ENCODE measurements at regions of chr7 and their contacts with region 1.

Region 1: GRCh38 chr7:99733448-99733847 is 1.5 kb downstream of the CYP3A7 start:
- DNase-seq: peak; percentile 42
- ATAC-seq: peak; percentile 49
- H3K4me3 ChIP-seq: no peak overlapping the region
- H3K27ac ChIP-seq: peak overlapping the region; percentile 50
- H3K4me1 ChIP-seq: peaks cover 81% of the 10 kb centered on the region
- H3K27me3 ChIP-seq: no peaks in the 10 kb centered on the region
- CTCF ChIP-seq: peak; percentile 63
- EP300 ChIP-seq: no peak
- POLR2A ChIP-seq: no peak
- RAD21 ChIP-seq: no peak

Region 2: GRCh38 chr7:99551767-99552463 is 181.5 kb before region 1 on chr7 and contains the start of gene FAM200A:
- CTCF ChIA-PET with region 1: no interaction called
- POLR2A ChIA-PET with region 1: no interaction called
- in situ Hi-C with region 1: no loop called
- intact Hi-C with region 1: no loop called
- DNase-seq: peak; percentile 81
- ATAC-seq: peak; percentile 99
- H3K4me3 ChIP-seq: peak within 1 kb of the TSS; percentile 72 to 92 (median 88)
- H3K27ac ChIP-seq: peak within 1 kb of the TSS; percentile 65
- H3K4me1 ChIP-seq: peaks cover 24% of the 10 kb centered on the region
- H3K27me3 ChIP-seq: no peaks in the 10 kb centered on the region; a peak in 1 of 5 replicates
- CTCF ChIP-seq: no peak; the same call in 1 of the 2 replicates
- EP300 ChIP-seq: peak in 1 of 2 experiments; percentile 13; a peak in 1 of 4 replicates
- POLR2A ChIP-seq: peak; percentile 85
- RAD21 ChIP-seq: 0 out of 2 replicates have a peak, but pooled peaks have one; percentile 19
- total RNA-seq, gene FAM200A: 6.3 and 10.4 TPM in 2 replicates

Region 3: DNA sequence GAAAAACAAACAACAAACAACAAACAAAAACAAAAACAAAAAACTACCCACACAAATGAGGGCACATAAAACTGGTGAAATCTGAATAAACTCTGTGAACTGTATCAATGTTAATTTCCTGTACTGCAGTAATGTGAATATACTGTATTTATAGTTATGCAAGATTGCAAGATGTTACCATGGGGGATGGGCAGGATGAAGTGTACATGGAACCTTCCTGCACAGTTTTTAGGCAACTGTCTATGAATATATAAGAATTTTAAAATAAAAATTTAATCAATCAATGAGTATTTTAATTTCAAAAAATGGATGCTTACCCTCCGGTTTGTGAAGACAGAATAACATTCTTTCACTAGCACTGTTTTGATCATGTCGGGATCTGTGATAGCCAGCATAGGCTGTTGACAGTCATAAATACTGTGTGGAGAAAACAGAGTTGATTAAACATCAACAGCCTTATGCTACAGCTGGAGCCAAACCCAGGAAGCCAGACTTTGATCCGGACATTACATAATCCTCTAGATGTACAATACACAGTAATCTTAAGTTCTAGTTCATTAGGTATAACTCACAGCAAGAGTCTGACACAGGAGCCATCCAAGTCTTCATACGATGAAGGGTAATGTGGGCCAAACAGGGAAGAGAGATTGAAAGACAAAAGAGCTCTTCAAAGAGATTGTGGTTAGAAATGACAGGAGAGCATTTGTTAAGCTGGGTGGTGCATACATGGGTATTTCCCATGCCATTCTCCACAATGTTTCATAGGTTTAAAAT is 13.3 kb before region 1 on chr7:
- CTCF ChIA-PET with region 1: no interaction called
- POLR2A ChIA-PET with region 1: interaction called, 16 read pairs
- in situ Hi-C with region 1: no loop called
- intact Hi-C with region 1: no loop called
- DNase-seq: peak; percentile 70
- ATAC-seq: peak; percentile 86
- H3K4me3 ChIP-seq: no peak overlapping the region; a peak in 1 of 6 replicates
- H3K27ac ChIP-seq: peak overlapping the region; percentile 48
- H3K4me1 ChIP-seq: peaks cover 24% of the 10 kb centered on the region
- H3K27me3 ChIP-seq: no peaks in the 10 kb centered on the region
- CTCF ChIP-seq: no peak
- EP300 ChIP-seq: peak in 1 of 2 experiments; percentile 73; a peak in 2 of 4 replicates
- POLR2A ChIP-seq: no peak
- RAD21 ChIP-seq: no peak

Region 4: DNA sequence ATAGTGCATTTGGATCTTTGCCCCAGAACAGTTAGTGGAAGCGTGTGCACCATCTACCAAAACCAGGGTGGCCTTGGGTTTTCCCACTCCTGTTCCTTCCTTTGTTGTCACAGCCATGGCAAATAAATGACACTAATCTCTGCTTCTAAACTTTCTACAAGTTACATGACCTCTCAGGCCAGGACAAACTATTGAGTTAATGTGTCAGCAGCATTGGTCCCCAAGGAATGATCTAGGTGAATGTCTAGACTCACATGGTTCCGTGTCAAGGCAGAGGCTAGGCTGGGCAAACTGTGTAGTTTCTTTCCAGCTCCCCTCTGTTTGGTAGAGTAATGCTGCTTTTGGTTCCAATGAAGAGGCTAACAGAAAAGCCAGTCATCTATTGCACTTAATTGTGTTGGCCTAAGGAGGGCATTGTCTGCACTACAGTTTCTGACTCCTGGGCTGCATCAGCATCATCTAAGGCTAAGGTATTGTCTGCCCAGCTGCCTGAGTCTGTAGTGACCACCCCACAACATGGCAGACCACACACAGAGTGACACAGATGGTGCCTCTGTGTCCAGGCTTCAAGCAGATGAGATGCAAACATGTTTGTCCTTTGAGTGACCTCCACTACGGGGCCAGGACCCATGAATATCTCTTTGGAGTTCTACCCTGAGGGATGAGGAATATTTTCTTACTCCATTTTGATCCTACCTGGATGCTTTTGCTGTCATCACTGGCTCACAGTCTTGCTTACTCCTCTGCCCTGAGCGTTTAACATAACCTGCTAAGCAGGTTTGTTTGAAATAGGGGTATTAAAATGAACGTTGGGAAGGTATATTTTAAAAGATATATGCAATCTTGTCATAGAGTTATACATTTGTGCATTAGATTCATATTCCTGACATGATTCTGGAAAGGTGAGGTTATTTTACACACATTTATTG is 48.8 kb after region 1 on chr7:
- CTCF ChIA-PET with region 1: no interaction called
- POLR2A ChIA-PET with region 1: no interaction called
- in situ Hi-C with region 1: no loop called
- intact Hi-C with region 1: no loop called
- DNase-seq: peak; percentile 19
- ATAC-seq: peak; percentile 65
- H3K4me3 ChIP-seq: no peak overlapping the region
- H3K27ac ChIP-seq: no peak overlapping the region
- H3K4me1 ChIP-seq: peaks cover 26% of the 10 kb centered on the region
- H3K27me3 ChIP-seq: no peaks in the 10 kb centered on the region
- CTCF ChIP-seq: peak; percentile 44; the same call in 1 of the 2 replicates
- EP300 ChIP-seq: no peak
- POLR2A ChIP-seq: no peak
- RAD21 ChIP-seq: no peak

Region 5: DNA sequence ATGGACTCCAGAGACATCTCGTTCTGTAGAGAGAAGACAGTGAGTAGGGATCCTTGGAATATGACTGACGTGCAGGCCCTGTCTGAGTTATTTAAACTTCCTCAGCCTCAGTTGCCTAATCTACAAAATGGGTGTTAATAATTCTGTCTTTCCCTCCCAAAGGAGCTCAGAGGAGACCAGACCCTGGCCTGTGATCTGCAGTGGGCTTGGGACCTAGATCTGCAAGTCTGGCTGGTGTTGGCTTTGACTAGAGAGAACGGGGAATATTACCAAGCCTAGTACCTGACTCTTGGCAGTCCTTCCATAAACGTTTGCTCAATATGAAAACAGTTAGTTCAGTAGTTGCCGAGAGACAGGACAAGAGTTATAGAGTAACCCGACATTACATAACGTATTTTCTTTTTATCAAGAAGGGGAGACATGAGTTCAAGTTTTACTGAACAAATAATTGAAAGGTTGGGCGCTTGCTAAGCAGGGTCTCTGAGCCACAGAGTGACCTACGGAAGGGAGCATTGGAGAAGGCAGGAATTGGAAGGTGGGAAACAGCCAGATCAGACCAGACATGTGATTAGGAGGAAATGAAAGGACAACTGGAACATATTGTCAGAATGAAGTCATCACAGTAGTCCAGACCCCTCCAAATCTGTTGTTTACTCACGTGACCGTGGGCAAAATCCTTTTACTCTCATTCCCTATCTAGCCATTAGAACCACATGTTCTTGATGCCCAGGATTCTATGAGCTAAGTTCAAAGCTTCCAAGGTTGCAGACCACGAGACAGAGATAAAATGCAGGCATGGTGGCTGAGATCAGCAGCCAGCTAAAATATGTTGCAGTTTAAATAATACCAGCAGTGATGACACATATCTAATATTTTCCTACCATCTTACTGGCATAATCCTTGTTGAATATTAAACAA is 61.4 kb after region 1 on chr7:
- CTCF ChIA-PET with region 1: no interaction called
- POLR2A ChIA-PET with region 1: interaction called, 3 read pairs
- in situ Hi-C with region 1: no loop called
- intact Hi-C with region 1: loop called (anchors 2 kb)
- DNase-seq: peak; percentile 93
- ATAC-seq: peak; percentile 91
- H3K4me3 ChIP-seq: peak overlapping the region in 1 of 3 experiments; percentile 2; a peak in 1 of 6 replicates
- H3K27ac ChIP-seq: peak overlapping the region; percentile 70
- H3K4me1 ChIP-seq: peaks cover 53% of the 10 kb centered on the region
- H3K27me3 ChIP-seq: no peaks in the 10 kb centered on the region
- CTCF ChIP-seq: no peak
- EP300 ChIP-seq: peak in 1 of 2 experiments; percentile 50; a peak in 1 of 4 replicates
- POLR2A ChIP-seq: no peak
- RAD21 ChIP-seq: no peak